HAP-1 (cell line): ENCODE measurements at regions of chr10 and their contacts with region 1.

Region 1: DNA sequence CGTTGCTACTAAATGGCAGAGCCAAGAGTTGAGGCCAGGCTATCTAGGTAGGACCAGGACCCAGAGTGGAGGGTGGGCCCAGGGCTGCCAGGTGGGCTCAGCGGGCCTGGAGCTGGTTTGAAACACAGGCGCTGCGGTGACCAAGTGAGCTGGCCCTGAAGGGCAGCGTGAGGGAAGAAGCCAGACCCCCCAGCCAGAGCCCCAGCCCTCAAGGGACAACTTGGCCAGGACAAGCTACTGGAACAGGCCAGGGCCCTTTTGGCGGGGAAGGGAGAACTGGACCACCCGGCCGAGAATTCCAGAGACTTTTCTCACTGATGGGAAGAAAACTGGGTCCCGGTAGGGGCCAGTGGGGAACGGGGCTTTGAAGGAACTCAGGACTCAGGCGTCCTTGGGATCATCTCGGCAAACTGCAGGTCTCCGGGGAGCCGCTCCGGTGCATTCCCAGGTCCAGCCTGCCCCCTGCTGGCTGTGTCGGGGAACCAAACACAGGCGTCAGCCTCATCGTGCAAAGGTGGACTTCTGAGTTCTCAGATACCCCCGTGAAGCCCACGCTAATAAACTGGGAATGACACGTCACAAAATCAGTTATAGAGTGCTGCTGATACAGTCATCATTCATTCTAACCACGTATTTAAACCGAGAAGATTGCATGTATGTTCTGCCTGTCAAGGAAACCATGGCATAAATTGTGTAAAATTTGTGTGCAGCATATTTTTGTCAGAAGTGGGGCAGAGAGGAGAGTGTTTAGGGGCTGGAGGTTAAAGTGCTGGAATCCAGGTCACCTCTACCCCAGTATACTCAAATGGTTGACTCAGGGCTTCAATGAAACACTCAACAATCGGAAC is 76.0 kb upstream of the CPXM2 start:
- DNase-seq: peak; percentile 29 to 83
- H3K4me3 ChIP-seq: no peak overlapping the region
- H3K4me1 ChIP-seq: no peaks in the 10 kb centered on the region
- H3K27me3 ChIP-seq: peaks cover under 1% of the 10 kb centered on the region; the same call in 1 of the 2 replicates

Region 2: GRCh38 chr10:123582084-123582989 is 385.3 kb before region 1 on chr10:
- in situ Hi-C with region 1: loop called (anchors 5 kb)
- DNase-seq: peak; percentile 31 to 85
- H3K4me3 ChIP-seq: no peak overlapping the region
- H3K4me1 ChIP-seq: peaks cover 7% of the 10 kb centered on the region; the same call in 1 of the 2 replicates
- H3K27me3 ChIP-seq: peaks cover 13% of the 10 kb centered on the region

Region 3: GRCh38 chr10:124306922-124307371 is 339.3 kb after region 1 on chr10:
- in situ Hi-C with region 1: no loop called
- DNase-seq: no peak
- H3K4me3 ChIP-seq: no peak overlapping the region
- H3K4me1 ChIP-seq: no peaks in the 10 kb centered on the region
- H3K27me3 ChIP-seq: no peaks in the 10 kb centered on the region